ENCODE measurements at regions of chrX and their contacts with region 1.

Region 1: DNA sequence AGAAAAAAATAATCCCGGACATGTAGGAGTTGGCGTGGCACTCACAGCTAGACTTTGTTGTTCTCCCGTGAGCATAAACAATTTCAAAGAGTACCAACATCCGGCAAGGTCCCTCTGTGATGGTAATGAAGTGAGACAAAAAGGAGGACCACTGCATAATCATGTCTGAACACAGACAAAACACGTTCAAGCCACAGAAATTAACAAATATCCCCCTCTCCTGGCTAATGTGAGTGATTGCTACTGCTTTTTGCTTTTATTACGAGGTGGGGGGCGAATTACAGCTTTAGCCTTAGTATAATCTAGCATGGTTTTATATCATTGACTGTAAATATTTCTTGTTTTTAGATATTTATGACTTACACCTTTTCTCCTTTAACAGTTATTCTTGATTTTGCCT is 118.5 kb downstream of the PLS3 start:
- DNase-seq: peak; percentile 39
- ATAC-seq: 0 out of 2 replicates have a peak, but pooled peaks have one; percentile 67
- H3K4me3 ChIP-seq: no peak overlapping the region
- H3K27ac ChIP-seq: no peak overlapping the region
- H3K4me1 ChIP-seq: no peaks in the 10 kb centered on the region
- H3K27me3 ChIP-seq: peaks cover 16% of the 10 kb centered on the region
- CTCF ChIP-seq: peak; percentile 57
- POLR2A ChIP-seq: no peak
- RAD21 ChIP-seq: peak; percentile 55

Region 2: DNA sequence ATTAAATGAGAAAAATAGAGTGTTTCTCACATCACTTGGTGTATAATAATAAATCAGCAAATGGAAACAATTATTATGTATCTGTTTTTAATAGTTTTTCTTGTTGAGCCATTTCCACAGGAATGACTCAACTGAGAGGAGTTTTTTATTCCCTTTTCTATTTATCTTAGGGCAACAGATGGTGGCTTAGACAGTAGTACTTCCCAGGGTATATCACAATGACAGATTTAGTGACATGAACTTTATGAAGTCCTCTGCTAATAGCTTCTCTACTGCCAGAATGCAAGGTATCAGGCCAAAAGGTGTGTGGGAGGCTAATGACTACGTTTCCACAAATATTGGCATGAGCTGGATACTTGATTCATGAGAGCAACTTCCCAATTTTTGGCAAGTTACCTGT is 968.9 kb before region 1 on chrX:
- CTCF ChIA-PET with region 1: no interaction called
- POLR2A ChIA-PET with region 1: interaction called, 11 read pairs
- dilution Hi-C with region 1: no loop called
- in situ Hi-C with region 1: no loop called
- intact Hi-C with region 1: no loop called
- DNase-seq: no peak
- ATAC-seq: no peak
- H3K4me3 ChIP-seq: no peak overlapping the region
- H3K27ac ChIP-seq: no peak overlapping the region
- H3K4me1 ChIP-seq: no peaks in the 10 kb centered on the region
- H3K27me3 ChIP-seq: no peaks in the 10 kb centered on the region
- CTCF ChIP-seq: no peak
- POLR2A ChIP-seq: no peak
- RAD21 ChIP-seq: no peak

Region 3: GRCh38 chrX:115226929-115227328 is 452.5 kb before region 1 on chrX:
- CTCF ChIA-PET with region 1: no interaction called
- POLR2A ChIA-PET with region 1: no interaction called
- dilution Hi-C with region 1: no loop called
- in situ Hi-C with region 1: no loop called
- intact Hi-C with region 1: loop called (anchors 10 kb)
- DNase-seq: peak; percentile 28
- ATAC-seq: peak; percentile 62
- H3K4me3 ChIP-seq: no peak overlapping the region
- H3K27ac ChIP-seq: no peak overlapping the region
- H3K4me1 ChIP-seq: no peaks in the 10 kb centered on the region
- H3K27me3 ChIP-seq: no peaks in the 10 kb centered on the region
- CTCF ChIP-seq: peak; percentile 53
- POLR2A ChIP-seq: no peak
- RAD21 ChIP-seq: peak; percentile 54

Region 4: GRCh38 chrX:115697806-115698205 is 18.3 kb after region 1 on chrX:
- CTCF ChIA-PET with region 1: no interaction called
- POLR2A ChIA-PET with region 1: no interaction called
- dilution Hi-C with region 1: no loop called
- in situ Hi-C with region 1: no loop called
- intact Hi-C with region 1: no loop called
- DNase-seq: no peak
- ATAC-seq: no peak
- H3K4me3 ChIP-seq: no peak overlapping the region
- H3K27ac ChIP-seq: no peak overlapping the region
- H3K4me1 ChIP-seq: no peaks in the 10 kb centered on the region
- H3K27me3 ChIP-seq: peaks cover 26% of the 10 kb centered on the region
- CTCF ChIP-seq: no peak
- POLR2A ChIP-seq: no peak
- RAD21 ChIP-seq: no peak

Measured in IMR-90 (cell line).